Activated CD4-positive, alpha-beta T cell treated with anti-CD3 and anti-CD28 coated beads for 36 hours (primary cell): ENCODE measurements at regions of chrX and their contacts with region 1.

Region 1: DNA sequence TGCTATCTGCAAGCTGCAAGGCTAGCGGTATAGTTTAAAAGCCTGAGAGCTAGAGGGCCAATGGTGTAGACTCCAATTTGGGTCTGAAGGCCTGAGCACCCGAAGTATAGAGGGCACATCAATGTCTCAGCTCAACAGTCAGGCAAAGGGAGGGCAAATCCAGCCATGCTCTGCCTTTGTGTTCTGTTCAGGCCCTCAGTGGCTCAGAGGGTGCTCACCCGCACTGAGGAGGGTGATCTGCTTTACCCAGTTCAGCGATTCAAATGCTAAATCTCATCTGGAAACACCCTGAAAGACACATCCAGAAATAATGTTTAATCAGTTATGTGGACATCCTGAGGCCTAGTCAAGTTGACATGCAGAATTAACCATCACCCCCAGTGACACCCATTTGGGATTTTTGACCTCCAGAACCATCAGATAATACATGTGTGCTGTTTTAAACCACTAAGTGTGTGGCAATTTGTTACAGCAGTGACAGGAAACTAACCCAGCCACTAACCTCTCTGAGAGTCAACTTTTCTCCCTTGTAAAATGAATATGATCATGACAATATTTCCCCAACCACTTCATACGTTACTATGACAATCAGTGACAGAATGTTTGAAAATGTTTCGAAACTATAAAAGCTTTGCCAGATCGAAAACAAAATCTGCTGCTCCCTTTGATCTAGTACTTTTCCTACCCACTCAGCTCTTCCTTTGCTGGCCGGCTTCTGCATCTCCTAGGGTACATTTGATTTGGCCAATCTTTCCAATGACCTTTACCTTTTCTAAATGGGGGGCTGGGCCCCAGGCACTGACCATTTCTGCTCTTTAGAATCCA is 8.4 kb upstream of the TBL1X start:
- DNase-seq: peak; percentile 49
- ATAC-seq: peak; percentile 89
- H3K4me3 Mint-ChIP-seq: peak overlapping the region; percentile 39
- H3K27ac Mint-ChIP-seq: peak overlapping the region; percentile 80
- H3K4me1 Mint-ChIP-seq: peaks cover 37% of the 10 kb centered on the region
- H3K27me3 Mint-ChIP-seq: no peaks in the 10 kb centered on the region

Region 2: DNA sequence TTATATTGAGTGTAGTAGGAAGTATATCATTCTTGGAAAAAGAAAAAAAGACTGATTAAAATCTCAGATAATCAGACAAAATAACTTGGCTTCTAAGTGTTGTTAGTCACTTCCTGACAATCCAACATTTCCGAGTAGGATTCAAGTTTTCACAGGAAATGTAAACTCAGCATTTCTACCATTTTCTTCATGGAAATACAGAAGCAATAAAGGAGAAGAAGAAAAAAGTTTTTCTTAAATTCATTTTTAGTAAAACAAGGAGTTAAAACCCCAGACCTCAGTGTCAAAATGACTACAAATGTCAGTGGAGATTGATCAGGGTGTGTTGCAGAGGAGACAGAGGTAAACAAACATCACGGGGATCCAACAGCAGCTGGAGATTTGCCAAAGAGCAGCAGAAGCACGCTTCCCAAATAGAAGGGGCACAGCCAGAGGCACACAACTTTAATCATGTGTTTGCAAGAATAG is 293.2 kb before region 1 on chrX:
- CTCF ChIA-PET with region 1: no interaction called
- POLR2A ChIA-PET with region 1: no interaction called
- intact Hi-C with region 1: loop called (anchors 1 to 10 kb)
- DNase-seq: no peak
- ATAC-seq: no peak
- H3K4me3 Mint-ChIP-seq: no peak overlapping the region
- H3K27ac Mint-ChIP-seq: no peak overlapping the region
- H3K4me1 Mint-ChIP-seq: peaks cover 42% of the 10 kb centered on the region
- H3K27me3 Mint-ChIP-seq: peaks cover 2% of the 10 kb centered on the region